Left ventricle myocardium inferior (tissue), 1 donor: ENCODE measurements at regions of chr6 and their contacts with region 1.

Region 1: GRCh38 chr6:148342357-148343046 is at the start of gene SASH1:
- DNase-seq: peak; percentile 66
- H3K4me3 ChIP-seq: peak within 1 kb of the TSS; percentile 83
- H3K27ac ChIP-seq: peak within 1 kb of the TSS; percentile 95
- H3K4me1 ChIP-seq: peaks cover 53% of the 10 kb centered on the region
- H3K27me3 ChIP-seq: no peaks in the 10 kb centered on the region
- CTCF ChIP-seq: no peak
- total RNA-seq, gene SASH1: 22.5 TPM

Region 2: DNA sequence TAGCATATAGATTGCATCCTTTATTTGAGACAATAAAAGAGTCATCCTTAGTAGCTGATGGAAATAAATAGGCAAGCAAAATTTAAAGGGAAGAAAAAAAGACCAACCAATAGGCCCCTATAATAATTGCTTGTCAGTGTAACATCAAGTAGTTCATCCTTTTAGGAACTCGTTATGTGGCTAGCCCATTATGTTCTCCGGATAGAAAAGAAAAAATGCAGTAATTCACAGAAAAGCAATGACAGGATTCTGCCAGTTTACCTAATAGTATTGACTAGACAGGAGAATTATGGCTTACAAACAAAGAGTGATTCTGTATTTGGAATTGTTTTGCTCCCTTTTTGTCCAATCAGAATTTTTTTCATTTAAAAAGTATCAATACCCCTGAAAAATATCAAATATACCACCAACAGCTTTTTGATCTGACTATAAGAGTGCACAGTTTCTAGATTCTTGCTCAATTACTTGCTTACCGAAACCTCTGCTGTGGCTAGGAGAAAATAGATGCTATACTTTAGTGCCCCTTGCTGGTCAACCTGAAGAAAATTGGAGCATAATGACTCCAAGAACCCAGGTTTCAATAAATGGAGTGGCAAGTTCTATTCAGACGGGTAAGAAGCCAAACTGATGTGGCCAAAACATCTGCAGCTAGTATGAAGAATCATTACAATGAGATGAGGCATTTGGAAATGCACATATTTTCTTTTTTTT is 91.4 kb before region 1 on chr6:
- intact Hi-C with region 1: no loop called
- DNase-seq: no peak
- H3K4me3 ChIP-seq: no peak overlapping the region
- H3K27ac ChIP-seq: peak overlapping the region; percentile 39
- H3K4me1 ChIP-seq: peaks cover 30% of the 10 kb centered on the region
- H3K27me3 ChIP-seq: no peaks in the 10 kb centered on the region
- CTCF ChIP-seq: peak; percentile 61

Region 3: DNA sequence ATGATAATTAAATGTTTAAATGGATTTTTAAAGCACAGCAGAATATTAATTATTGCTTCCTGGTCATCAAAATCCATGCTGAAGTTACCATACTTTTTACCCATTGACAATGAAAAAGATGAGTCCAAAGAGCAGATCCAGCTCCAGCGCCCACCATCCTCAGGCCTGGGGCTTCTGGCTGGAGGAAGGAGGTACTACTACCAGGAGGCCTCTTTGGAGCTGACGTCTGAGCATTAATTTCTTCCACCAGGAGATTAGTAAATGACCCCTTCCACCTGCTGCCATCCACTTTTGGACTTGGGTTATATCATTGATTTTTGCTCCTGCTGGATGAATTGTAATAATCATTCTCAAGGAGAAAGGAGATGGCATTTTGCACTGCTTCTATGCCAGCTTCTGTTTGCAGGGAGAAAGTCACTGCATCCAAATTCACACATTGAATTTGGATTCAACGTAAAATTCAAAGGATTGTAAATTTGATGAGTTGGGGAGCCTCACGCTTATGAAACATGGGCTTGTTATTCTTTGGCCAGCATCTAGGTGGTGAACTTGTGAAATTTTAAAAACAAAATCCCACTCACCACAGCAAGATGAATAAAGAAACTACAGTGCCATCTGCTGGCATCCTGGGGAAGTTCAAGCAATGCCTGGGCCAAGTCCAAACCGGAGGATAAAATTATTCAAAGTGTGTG is 122.0 kb after region 1 on chr6:
- intact Hi-C with region 1: loop called (anchors 10 kb)
- DNase-seq: peak; percentile 62
- H3K4me3 ChIP-seq: no peak overlapping the region
- H3K27ac ChIP-seq: peak overlapping the region; percentile 53
- H3K4me1 ChIP-seq: peaks cover 65% of the 10 kb centered on the region
- H3K27me3 ChIP-seq: no peaks in the 10 kb centered on the region
- CTCF ChIP-seq: peak; percentile 96